IMR-90 (cell line): ENCODE measurements at regions of chr13 and their contacts with region 1.

Region 1: GRCh38 chr13:76854894-76855293 is 31.3 kb downstream of the KCTD12 start:
- DNase-seq: peak; percentile 16
- ATAC-seq: peak; percentile 48
- H3K4me3 ChIP-seq: no peak overlapping the region
- H3K27ac ChIP-seq: no peak overlapping the region
- H3K4me1 ChIP-seq: peaks cover 3% of the 10 kb centered on the region
- H3K27me3 ChIP-seq: no peaks in the 10 kb centered on the region
- CTCF ChIP-seq: no peak
- POLR2A ChIP-seq: no peak
- RAD21 ChIP-seq: no peak

Region 2: DNA sequence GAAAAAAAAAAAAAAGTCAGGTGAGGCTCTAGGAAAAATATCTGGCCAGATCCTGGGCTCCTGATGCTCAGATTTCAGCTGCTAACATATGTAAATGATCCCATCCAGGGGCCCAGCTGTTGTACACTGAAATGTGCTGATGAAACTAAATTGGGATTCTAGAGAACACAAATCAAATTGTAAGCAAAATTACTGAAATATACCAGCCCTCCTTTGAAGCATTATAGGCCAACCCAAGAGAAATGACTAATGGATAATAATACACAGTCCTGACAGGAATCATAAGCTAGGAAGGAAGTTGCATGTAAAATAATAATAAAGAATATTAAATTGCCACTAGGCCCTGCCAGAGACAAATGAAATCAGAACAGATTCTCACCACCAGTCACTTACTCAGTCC is 13.5 kb after region 1 on chr13:
- CTCF ChIA-PET with region 1: interaction called, 10 read pairs
- POLR2A ChIA-PET with region 1: no interaction called
- dilution Hi-C with region 1: no loop called
- in situ Hi-C with region 1: no loop called
- intact Hi-C with region 1: no loop called
- DNase-seq: no peak
- ATAC-seq: no peak
- H3K4me3 ChIP-seq: no peak overlapping the region
- H3K27ac ChIP-seq: no peak overlapping the region
- H3K4me1 ChIP-seq: no peaks in the 10 kb centered on the region
- H3K27me3 ChIP-seq: no peaks in the 10 kb centered on the region; the same call in 1 of the 2 replicates
- CTCF ChIP-seq: no peak
- POLR2A ChIP-seq: no peak
- RAD21 ChIP-seq: no peak

Region 3: GRCh38 chr13:77034881-77035280 is 180.0 kb after region 1 on chr13:
- CTCF ChIA-PET with region 1: no interaction called
- POLR2A ChIA-PET with region 1: no interaction called
- dilution Hi-C with region 1: no loop called
- in situ Hi-C with region 1: no loop called
- intact Hi-C with region 1: no loop called
- DNase-seq: peak; percentile 79
- ATAC-seq: peak; percentile 85
- H3K4me3 ChIP-seq: no peak overlapping the region
- H3K27ac ChIP-seq: no peak overlapping the region
- H3K4me1 ChIP-seq: peaks cover 3% of the 10 kb centered on the region; the same call in 1 of the 2 replicates
- H3K27me3 ChIP-seq: no peaks in the 10 kb centered on the region
- CTCF ChIP-seq: no peak
- POLR2A ChIP-seq: no peak
- RAD21 ChIP-seq: no peak

Region 4: DNA sequence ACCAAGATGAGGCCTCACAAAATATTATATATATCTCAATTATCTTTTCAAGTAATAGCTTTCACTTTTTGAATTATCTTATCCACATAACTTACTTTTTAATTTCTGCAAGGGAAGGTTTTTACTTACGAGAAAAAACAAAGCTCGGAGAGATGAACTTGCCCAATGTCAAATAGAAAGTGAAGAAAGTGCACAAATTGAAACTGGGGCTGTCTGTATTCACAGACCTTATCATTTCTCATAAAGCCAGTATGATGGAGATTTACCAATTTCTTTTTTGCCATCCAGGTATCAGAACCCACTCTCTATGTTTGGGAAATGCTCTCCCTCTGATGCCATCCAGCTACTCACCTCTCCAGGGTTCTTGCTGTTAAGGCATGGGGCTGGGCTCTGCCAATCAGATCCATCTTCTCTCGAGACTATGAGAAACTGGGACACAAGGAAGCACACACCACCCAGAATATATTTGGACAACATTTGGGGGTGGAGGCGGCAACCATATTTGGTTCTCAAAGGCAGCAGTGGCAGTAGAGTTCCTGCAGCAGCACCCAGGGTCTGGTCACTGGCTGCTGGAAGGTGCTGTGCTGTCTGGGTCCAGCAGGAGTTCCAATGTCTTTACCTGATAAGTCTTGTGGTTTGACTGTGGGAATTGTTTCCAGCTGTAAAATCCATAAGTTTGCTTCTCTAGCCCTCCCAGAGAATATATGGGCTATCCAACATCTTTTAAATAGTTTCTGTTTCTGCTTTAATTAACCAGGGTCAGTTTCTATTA is 634.9 kb after region 1 on chr13:
- CTCF ChIA-PET with region 1: no interaction called
- POLR2A ChIA-PET with region 1: no interaction called
- dilution Hi-C with region 1: no loop called
- in situ Hi-C with region 1: no loop called
- intact Hi-C with region 1: no loop called
- DNase-seq: no peak
- ATAC-seq: no peak
- H3K4me3 ChIP-seq: no peak overlapping the region
- H3K27ac ChIP-seq: no peak overlapping the region
- H3K4me1 ChIP-seq: no peaks in the 10 kb centered on the region
- H3K27me3 ChIP-seq: 0 out of 2 replicates have a peak, but pooled peaks cover 2% of the 10 kb centered on the region
- CTCF ChIP-seq: no peak
- POLR2A ChIP-seq: no peak
- RAD21 ChIP-seq: no peak